ENCODE measurements at regions of chr1 and their contacts with region 1.

Region 1: GRCh38 chr1:117605774-117606648 is at the start of gene TENT5C:
- DNase-seq: peak; percentile 99
- total RNA-seq, gene TENT5C: 3.6 to 12.4 TPM

Region 2: GRCh38 chr1:116020668-116021275 is 1585.2 kb before region 1 on chr1:
- intact Hi-C with region 1: loop called in 1 of 2 experiments (anchors 10 kb)
- DNase-seq: no peak

Region 3: GRCh38 chr1:117534995-117535467 is 71.0 kb before region 1 on chr1:
- intact Hi-C with region 1: loop called in 1 of 2 experiments (anchors 10 kb)
- DNase-seq: no peak

Region 4: DNA sequence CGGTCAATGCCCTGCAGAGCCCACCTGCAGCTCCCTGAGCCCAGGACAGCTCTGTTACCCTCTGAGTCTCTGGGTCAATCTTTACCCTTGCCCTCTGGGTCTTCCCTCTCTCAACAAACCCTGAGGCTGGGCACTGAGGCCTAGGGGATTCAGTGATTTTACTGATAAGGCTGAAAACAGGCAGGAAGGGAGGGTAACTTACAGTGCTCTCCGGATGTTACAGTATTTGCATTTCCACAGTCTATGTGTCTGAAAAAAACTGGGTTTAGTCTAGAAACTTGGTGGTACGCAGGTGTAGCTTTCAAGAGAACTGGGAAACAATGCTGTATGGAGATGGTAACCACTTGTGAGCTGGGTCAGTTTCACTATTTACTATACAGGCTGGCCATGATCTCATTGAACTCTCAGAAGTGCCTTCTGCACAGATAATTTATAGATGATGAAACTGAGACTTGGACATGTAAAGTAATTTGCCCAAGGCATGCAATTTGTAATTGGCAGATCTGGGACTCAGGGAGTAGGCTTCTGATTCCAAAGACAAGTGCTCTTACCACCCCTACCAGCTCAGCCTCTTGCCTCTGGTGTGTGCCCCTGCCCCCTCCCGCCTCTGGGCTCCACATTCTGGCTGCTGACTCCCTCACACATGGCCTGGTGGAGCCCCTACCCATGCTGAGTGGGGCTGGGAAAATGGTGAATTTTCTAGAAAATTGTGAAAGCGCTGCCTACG is 48.6 kb after region 1 on chr1:
- intact Hi-C with region 1: no loop called
- DNase-seq: peak; percentile 51

Measured in posterior vena cava (tissue), 2 donors.